Mammary epithelial cell (primary cell): ENCODE measurements at regions of chr12 and their contacts with region 1.

Region 1: GRCh38 chr12:92511786-92512185 is 191.0 kb upstream of the PLEKHG7 start:
- DNase-seq: no peak
- H3K4me3 ChIP-seq: no peak overlapping the region
- H3K27ac ChIP-seq: no peak overlapping the region
- H3K4me1 ChIP-seq: peaks cover 14% of the 10 kb centered on the region
- H3K27me3 ChIP-seq: no peaks in the 10 kb centered on the region
- CTCF ChIP-seq: no peak

Region 2: GRCh38 chr12:92546635-92547348 is 35.0 kb after region 1 on chr12:
- CTCF ChIA-PET with region 1: no interaction called
- dilution Hi-C with region 1: loop called (anchors 5 kb)
- in situ Hi-C with region 1: no loop called
- intact Hi-C with region 1: loop called (anchors 5 kb)
- DNase-seq: no peak
- H3K4me3 ChIP-seq: no peak overlapping the region
- H3K27ac ChIP-seq: no peak overlapping the region
- H3K4me1 ChIP-seq: peaks cover 15% of the 10 kb centered on the region
- H3K27me3 ChIP-seq: no peaks in the 10 kb centered on the region
- CTCF ChIP-seq: no peak